ENCODE measurements at regions of chr12 and their contacts with region 1.

Region 1: GRCh38 chr12:22453511-22453910 is 90.8 kb downstream of the C2CD5 start:
- DNase-seq: no peak
- H3K4me3 ChIP-seq: no peak overlapping the region
- H3K27ac ChIP-seq: no peak overlapping the region
- H3K4me1 ChIP-seq: no peaks in the 10 kb centered on the region
- H3K27me3 ChIP-seq: no peaks in the 10 kb centered on the region

Region 2: DNA sequence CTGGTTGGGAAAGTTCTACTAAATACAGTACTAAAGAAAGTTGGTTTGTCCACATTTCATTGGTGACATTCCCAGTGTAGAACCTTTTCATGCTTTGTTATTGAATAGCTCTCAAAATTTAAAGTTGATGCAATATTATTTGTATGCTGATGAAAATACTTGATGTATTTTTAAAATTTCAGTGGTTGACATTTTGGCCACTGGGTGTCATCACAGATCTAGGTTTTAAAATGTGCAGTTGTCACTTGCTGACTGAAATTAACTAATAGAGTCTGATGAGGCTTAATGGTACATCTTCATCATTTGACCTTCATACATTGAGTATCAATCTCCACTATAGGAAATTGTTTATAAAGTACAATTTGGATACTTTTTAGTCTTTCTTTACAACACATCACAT is 370.3 kb before region 1 on chr12:
- in situ Hi-C with region 1: loop called (anchors 5 kb)
- DNase-seq: peak; percentile 50
- H3K4me3 ChIP-seq: no peak overlapping the region
- H3K27ac ChIP-seq: no peak overlapping the region
- H3K4me1 ChIP-seq: no peaks in the 10 kb centered on the region
- H3K27me3 ChIP-seq: 0 out of 2 replicates have a peak, but pooled peaks cover 9% of the 10 kb centered on the region